HepG2 (cell line): ENCODE measurements at regions of chr18 and their contacts with region 1.

Region 1: GRCh38 chr18:58552057-58552461 is 76.8 kb downstream of the ALPK2 start:
- DNase-seq: peak; percentile 68
- ATAC-seq: no peak
- H3K4me3 ChIP-seq: no peak overlapping the region
- H3K27ac ChIP-seq: no peak overlapping the region
- H3K4me1 ChIP-seq: peaks cover 62% of the 10 kb centered on the region
- H3K27me3 ChIP-seq: no peaks in the 10 kb centered on the region
- CTCF ChIP-seq: no peak
- EP300 ChIP-seq: peak in 1 of 2 experiments; percentile 73; a peak in 1 of 4 replicates
- POLR2A ChIP-seq: no peak
- RAD21 ChIP-seq: no peak

Region 2: GRCh38 chr18:58362027-58362575 is 190.0 kb before region 1 on chr18:
- CTCF ChIA-PET with region 1: no interaction called
- POLR2A ChIA-PET with region 1: no interaction called
- in situ Hi-C with region 1: no loop called
- intact Hi-C with region 1: no loop called
- DNase-seq: no peak
- ATAC-seq: no peak
- H3K4me3 ChIP-seq: no peak overlapping the region
- H3K27ac ChIP-seq: no peak overlapping the region
- H3K4me1 ChIP-seq: no peaks in the 10 kb centered on the region
- H3K27me3 ChIP-seq: no peaks in the 10 kb centered on the region
- CTCF ChIP-seq: no peak
- EP300 ChIP-seq: no peak
- POLR2A ChIP-seq: no peak
- RAD21 ChIP-seq: no peak

Region 3: DNA sequence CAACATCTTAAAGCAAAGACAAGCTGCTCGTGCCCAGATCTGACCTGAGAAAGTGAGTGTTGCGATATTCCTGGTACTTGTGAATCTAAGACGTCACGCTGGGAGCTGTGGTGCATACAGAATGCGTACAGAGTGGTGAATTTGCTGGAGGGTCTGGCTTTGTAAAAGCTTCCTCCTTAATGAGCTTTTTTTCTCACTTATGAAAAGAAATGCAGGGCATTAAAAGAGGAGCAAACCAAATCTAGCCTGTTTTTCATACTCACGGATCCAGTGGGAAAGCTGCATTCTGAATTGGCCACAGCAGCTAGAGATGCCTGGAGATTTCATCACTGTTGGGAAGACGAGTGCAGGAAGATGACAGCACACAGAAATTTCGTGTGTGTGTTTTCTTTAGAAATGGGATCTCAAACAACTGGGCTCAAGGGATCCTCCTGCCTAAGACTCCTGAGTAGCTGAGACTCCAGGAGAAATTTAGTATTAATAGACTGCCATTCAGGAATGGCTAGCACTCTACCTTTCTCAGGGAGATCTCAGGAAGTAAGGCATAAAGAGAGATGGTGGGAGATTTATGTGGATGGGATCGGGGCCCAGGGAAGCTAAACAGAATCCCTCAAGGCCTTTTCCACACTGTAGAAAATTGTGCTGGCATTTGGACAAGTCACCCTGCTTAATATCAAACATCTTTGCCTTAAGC is 104.5 kb before region 1 on chr18:
- CTCF ChIA-PET with region 1: no interaction called
- POLR2A ChIA-PET with region 1: no interaction called
- in situ Hi-C with region 1: no loop called
- intact Hi-C with region 1: no loop called
- DNase-seq: no peak
- ATAC-seq: no peak
- H3K4me3 ChIP-seq: no peak overlapping the region
- H3K27ac ChIP-seq: no peak overlapping the region
- H3K4me1 ChIP-seq: peaks cover 39% of the 10 kb centered on the region
- H3K27me3 ChIP-seq: no peaks in the 10 kb centered on the region
- CTCF ChIP-seq: no peak
- EP300 ChIP-seq: no peak
- POLR2A ChIP-seq: no peak
- RAD21 ChIP-seq: no peak

Region 4: DNA sequence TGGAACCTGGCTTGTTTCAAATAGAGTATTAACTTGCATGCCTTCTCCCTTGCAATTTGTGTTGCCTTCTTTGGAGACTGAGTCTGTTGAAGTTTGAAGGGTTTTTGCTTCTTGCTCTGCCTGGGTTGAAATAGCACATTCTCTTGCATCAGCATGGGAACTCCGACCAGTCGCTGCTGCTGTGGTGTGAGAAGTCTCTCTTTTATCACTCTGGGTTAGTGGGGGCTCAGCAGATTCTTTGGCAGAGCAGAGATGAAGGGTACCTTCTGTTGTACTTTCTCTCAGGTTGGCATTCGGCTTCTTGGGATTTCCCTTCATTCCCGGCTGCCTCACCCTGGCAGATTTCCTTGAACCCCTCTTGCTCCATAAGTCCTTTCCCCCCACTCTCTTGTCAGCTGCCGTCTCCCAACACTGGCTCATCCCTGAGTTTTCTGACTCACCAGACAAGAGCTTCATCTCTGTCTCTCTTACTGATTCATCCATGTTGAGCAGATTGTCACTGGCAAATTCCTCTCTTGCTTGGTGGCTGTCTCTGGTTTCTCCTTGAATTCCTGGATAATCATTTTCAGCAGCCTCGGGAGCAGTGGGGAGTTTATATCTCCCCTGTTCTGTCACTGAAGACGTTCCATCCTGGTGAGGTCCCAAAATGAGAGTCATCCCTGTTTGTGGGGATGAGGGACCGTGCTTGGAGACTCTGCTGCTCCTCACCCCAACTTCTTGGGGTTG is 26.9 kb after region 1 on chr18:
- CTCF ChIA-PET with region 1: no interaction called
- POLR2A ChIA-PET with region 1: interaction called, 10 read pairs
- in situ Hi-C with region 1: no loop called
- intact Hi-C with region 1: loop called (anchors 2 kb)
- DNase-seq: peak; percentile 28
- ATAC-seq: peak; percentile 52
- H3K4me3 ChIP-seq: peak overlapping the region; percentile 57 to 66 (median 65)
- H3K27ac ChIP-seq: no peak overlapping the region
- H3K4me1 ChIP-seq: peaks cover 42% of the 10 kb centered on the region
- H3K27me3 ChIP-seq: no peaks in the 10 kb centered on the region
- CTCF ChIP-seq: no peak
- EP300 ChIP-seq: no peak
- POLR2A ChIP-seq: no peak
- RAD21 ChIP-seq: no peak

Region 5: GRCh38 chr18:58590839-58591238 is 38.8 kb after region 1 on chr18:
- CTCF ChIA-PET with region 1: no interaction called
- POLR2A ChIA-PET with region 1: no interaction called
- in situ Hi-C with region 1: loop called (anchors 5 kb)
- intact Hi-C with region 1: no loop called
- DNase-seq: no peak
- ATAC-seq: peak; percentile 68
- H3K4me3 ChIP-seq: peak overlapping the region in 1 of 3 experiments; percentile 41; a peak in 2 of 6 replicates
- H3K27ac ChIP-seq: no peak overlapping the region
- H3K4me1 ChIP-seq: peaks cover 34% of the 10 kb centered on the region
- H3K27me3 ChIP-seq: peaks cover 4 to 17% of the 10 kb centered on the region in 2 experiments; a peak in 3 of 5 replicates
- CTCF ChIP-seq: no peak
- EP300 ChIP-seq: no peak
- POLR2A ChIP-seq: no peak
- RAD21 ChIP-seq: no peak

Region 6: DNA sequence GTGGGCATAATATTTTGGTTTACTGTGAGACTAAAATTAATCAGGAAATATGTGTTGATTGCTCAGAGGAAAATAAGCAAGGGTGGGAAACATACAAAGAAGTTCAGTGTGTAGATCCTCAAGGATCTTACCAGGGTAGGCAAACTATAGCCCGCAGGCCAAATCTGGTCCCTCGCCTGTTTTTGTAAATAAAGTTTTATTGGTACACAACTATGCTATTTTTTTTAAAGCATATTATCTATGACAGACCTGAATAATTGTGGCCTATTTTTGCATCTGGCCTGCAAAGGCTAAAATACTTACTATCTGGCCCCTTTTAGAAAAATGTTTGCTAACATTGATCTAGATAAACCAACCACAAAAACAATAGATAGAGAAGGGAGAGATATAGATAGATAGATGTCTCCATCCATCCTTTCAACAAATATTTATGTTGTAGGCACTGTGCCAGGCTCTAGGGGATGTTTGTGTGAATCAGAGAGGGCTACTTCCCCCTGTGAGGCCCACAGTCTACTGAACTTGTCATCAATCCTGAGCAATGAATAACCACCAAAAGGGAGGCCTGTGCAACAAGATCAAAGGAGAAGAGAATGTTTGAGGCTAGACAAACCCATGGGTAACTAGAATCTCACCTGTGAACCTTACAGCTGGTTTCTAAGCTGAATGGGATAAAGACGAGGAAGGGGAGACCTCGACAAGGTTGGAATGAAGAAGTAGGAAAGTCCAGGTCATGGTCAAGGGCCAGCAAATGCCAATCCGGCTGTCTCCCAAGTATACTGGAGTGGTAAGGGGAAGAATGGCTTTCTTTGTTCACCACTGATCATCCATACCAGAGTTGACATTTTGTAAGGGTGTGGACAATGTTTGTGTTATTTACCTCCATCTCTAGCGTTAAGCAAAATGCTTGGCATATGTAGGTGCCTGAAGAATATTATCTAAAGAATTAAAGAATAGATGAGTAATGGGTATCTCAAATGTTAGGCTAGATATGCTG is 53.3 kb after region 1 on chr18:
- CTCF ChIA-PET with region 1: no interaction called
- POLR2A ChIA-PET with region 1: no interaction called
- in situ Hi-C with region 1: no loop called
- intact Hi-C with region 1: loop called (anchors 2 kb)
- DNase-seq: peak; percentile 99
- ATAC-seq: peak; percentile 92
- H3K4me3 ChIP-seq: no peak overlapping the region
- H3K27ac ChIP-seq: peak overlapping the region; percentile 45
- H3K4me1 ChIP-seq: peaks cover 78% of the 10 kb centered on the region
- H3K27me3 ChIP-seq: no peaks in the 10 kb centered on the region
- CTCF ChIP-seq: no peak
- EP300 ChIP-seq: peak in 1 of 2 experiments; percentile 95; a peak in 3 of 4 replicates
- POLR2A ChIP-seq: no peak
- RAD21 ChIP-seq: no peak

Region 7: GRCh38 chr18:58806826-58807714 is 255.0 kb after region 1 on chr18:
- CTCF ChIA-PET with region 1: no interaction called
- POLR2A ChIA-PET with region 1: no interaction called
- in situ Hi-C with region 1: no loop called
- intact Hi-C with region 1: no loop called
- DNase-seq: no peak
- ATAC-seq: no peak
- H3K4me3 ChIP-seq: no peak overlapping the region
- H3K27ac ChIP-seq: no peak overlapping the region
- H3K4me1 ChIP-seq: no peaks in the 10 kb centered on the region
- H3K27me3 ChIP-seq: peaks cover 0 to 18% of the 10 kb centered on the region in 2 experiments; a peak in 3 of 5 replicates
- CTCF ChIP-seq: no peak
- EP300 ChIP-seq: no peak
- POLR2A ChIP-seq: no peak
- RAD21 ChIP-seq: no peak